ENCODE measurements at regions of chr17 and their contacts with region 1.

Region 1: DNA sequence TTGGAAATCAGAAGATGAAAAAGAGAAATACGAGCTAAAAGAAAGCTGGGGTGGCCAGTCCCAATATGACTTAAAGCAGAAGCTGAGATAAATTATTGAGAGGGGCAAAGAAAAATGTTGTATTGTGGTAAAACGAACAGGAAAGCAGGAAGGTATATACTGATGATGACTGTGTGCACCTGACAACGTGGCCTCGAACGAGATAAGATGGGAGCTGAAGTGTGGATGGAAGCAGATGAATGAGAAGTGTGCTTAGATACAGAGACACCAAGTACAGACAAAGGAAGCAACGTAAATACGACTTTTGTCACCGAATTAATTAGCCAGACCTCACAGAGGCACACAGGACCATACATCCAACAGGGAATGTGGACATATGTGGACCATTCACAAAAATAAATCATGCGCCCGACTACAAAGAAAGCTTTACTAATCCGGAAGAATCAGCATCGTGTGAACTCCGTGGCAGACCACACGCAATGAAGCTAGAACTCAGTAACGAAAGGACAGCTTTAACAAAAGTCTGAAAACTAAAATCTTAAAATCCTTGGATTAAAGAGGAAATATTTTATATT is 218.7 kb downstream of the RPTOR start:
- DNase-seq: no peak
- ATAC-seq: no peak
- H3K4me3 ChIP-seq: no peak overlapping the region
- H3K27ac ChIP-seq: no peak overlapping the region
- H3K4me1 ChIP-seq: peaks cover 15% of the 10 kb centered on the region
- H3K27me3 ChIP-seq: no peaks in the 10 kb centered on the region
- CTCF ChIP-seq: no peak

Region 2: DNA sequence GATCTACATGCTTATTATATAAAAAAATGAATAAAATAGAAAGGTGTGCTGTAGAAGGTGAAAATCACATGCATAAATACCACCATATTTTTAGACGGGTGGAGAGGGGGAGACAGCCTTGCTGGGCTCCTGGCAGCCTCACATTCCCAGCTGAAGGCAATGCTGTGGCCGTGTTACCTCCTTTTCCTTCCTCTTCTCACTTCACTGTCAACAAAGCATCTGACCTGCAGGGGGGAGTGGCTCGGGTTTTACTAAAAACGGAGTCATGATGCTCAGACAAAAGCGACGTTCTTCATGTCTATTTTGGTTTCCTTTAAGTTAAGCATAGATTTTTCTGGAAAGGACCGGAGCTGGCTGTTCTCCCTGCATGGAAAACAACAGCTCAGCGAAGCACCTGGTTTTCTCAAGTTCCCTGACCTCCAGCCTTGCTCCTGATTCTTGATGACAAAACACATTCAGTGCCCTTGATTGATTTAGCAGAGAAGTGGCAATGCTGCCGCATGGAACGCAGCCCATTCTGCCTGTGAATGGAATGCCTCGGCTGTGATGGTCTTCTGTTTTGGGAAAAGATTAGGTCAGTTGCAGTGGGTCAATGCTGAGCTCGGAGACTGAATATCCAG is 224.2 kb before region 1 on chr17:
- CTCF ChIA-PET with region 1: no interaction called
- POLR2A ChIA-PET with region 1: interaction called, 11 read pairs
- in situ Hi-C with region 1: no loop called
- intact Hi-C with region 1: no loop called
- DNase-seq: no peak
- ATAC-seq: peak; percentile 60
- H3K4me3 ChIP-seq: no peak overlapping the region
- H3K27ac ChIP-seq: no peak overlapping the region
- H3K4me1 ChIP-seq: no peaks in the 10 kb centered on the region
- H3K27me3 ChIP-seq: no peaks in the 10 kb centered on the region
- CTCF ChIP-seq: no peak

Region 3: GRCh38 chr17:80552523-80552922 is 210.9 kb before region 1 on chr17:
- CTCF ChIA-PET with region 1: no interaction called
- POLR2A ChIA-PET with region 1: no interaction called
- in situ Hi-C with region 1: no loop called
- intact Hi-C with region 1: no loop called
- DNase-seq: no peak
- ATAC-seq: no peak
- H3K4me3 ChIP-seq: no peak overlapping the region
- H3K27ac ChIP-seq: no peak overlapping the region
- H3K4me1 ChIP-seq: peaks cover 5% of the 10 kb centered on the region; the same call in 1 of the 2 replicates
- H3K27me3 ChIP-seq: no peaks in the 10 kb centered on the region
- CTCF ChIP-seq: no peak